ENCODE measurements at regions of chr1 and their contacts with region 1.

Region 1: GRCh38 chr1:154760469-154760933 is 109.6 kb downstream of the KCNN3 start:
- DNase-seq: peak in 1 of 2 experiments; percentile 93
- H3K4me3 ChIP-seq: peak overlapping the region; percentile 33 to 72 (median 38); a peak in 7 of 8 replicates
- H3K27ac ChIP-seq: no peak overlapping the region
- H3K4me1 ChIP-seq: peaks cover 0 to 2% (median under 1%) of the 10 kb centered on the region in 4 experiments; a peak in 1 of 7 replicates
- H3K27me3 ChIP-seq: peaks cover 0 to 8% (median 1%) of the 10 kb centered on the region in 4 experiments; a peak in 4 of 7 replicates
- CTCF ChIP-seq: peak; percentile 72 to 87 (median 72)
- EP300 ChIP-seq: no peak
- POLR2A ChIP-seq: no peak
- RAD21 ChIP-seq: peak; percentile 55 to 70

Region 2: GRCh38 chr1:154730259-154730658 is 30.2 kb before region 1 on chr1:
- CTCF ChIA-PET with region 1: interaction called, 13 read pairs
- POLR2A ChIA-PET with region 1: no interaction called
- DNase-seq: no peak
- H3K4me3 ChIP-seq: no peak overlapping the region
- H3K27ac ChIP-seq: no peak overlapping the region
- H3K4me1 ChIP-seq: peaks cover 3 to 17% (median 8%) of the 10 kb centered on the region in 4 experiments; a peak in 6 of 7 replicates
- H3K27me3 ChIP-seq: no peaks in the 10 kb centered on the region
- CTCF ChIP-seq: no peak
- EP300 ChIP-seq: no peak
- POLR2A ChIP-seq: no peak
- RAD21 ChIP-seq: no peak

Region 3: GRCh38 chr1:154747740-154748404 is 12.6 kb before region 1 on chr1:
- CTCF ChIA-PET with region 1: interaction called, 34 read pairs
- POLR2A ChIA-PET with region 1: no interaction called
- DNase-seq: no peak
- H3K4me3 ChIP-seq: no peak overlapping the region
- H3K27ac ChIP-seq: no peak overlapping the region
- H3K4me1 ChIP-seq: peaks cover 0 to 27% (median 11%) of the 10 kb centered on the region in 4 experiments; a peak in 6 of 7 replicates
- H3K27me3 ChIP-seq: no peaks in the 10 kb centered on the region
- CTCF ChIP-seq: no peak
- EP300 ChIP-seq: no peak
- POLR2A ChIP-seq: no peak
- RAD21 ChIP-seq: no peak

Region 4: GRCh38 chr1:154772606-154773506 is 12.4 kb after region 1 on chr1:
- CTCF ChIA-PET with region 1: interaction called, 56 read pairs
- POLR2A ChIA-PET with region 1: interaction called, 4 read pairs
- DNase-seq: peak; percentile 17 to 69
- H3K4me3 ChIP-seq: no peak overlapping the region
- H3K27ac ChIP-seq: no peak overlapping the region
- H3K4me1 ChIP-seq: peaks cover 0 to 11% (median 8%) of the 10 kb centered on the region in 4 experiments; a peak in 6 of 7 replicates
- H3K27me3 ChIP-seq: no peaks in the 10 kb centered on the region
- CTCF ChIP-seq: peak; percentile 55 to 65 (median 60)
- EP300 ChIP-seq: no peak
- POLR2A ChIP-seq: no peak
- RAD21 ChIP-seq: peak; percentile 76 to 82

Region 5: GRCh38 chr1:154780541-154780940 is 20.0 kb after region 1 on chr1:
- CTCF ChIA-PET with region 1: interaction called, 56 read pairs
- POLR2A ChIA-PET with region 1: interaction called, 3 read pairs
- DNase-seq: no peak
- H3K4me3 ChIP-seq: no peak overlapping the region
- H3K27ac ChIP-seq: no peak overlapping the region
- H3K4me1 ChIP-seq: peaks cover 0 to 4% (median 1%) of the 10 kb centered on the region in 4 experiments; a peak in 3 of 7 replicates
- H3K27me3 ChIP-seq: no peaks in the 10 kb centered on the region
- CTCF ChIP-seq: no peak
- EP300 ChIP-seq: no peak
- POLR2A ChIP-seq: no peak
- RAD21 ChIP-seq: no peak

Region 6: GRCh38 chr1:154870115-154870571 is 109.6 kb after region 1 on chr1 and contains the start of gene KCNN3:
- CTCF ChIA-PET with region 1: interaction called, 16 read pairs
- POLR2A ChIA-PET with region 1: no interaction called
- DNase-seq: peak; percentile 84 to 99
- H3K4me3 ChIP-seq: peak within 1 kb of the TSS; percentile 10 to 58 (median 38); a peak in 7 of 8 replicates
- H3K27ac ChIP-seq: no peak within 1 kb of the TSS
- H3K4me1 ChIP-seq: peaks cover 13 to 51% (median 21%) of the 10 kb centered on the region in 4 experiments; a peak in 6 of 7 replicates
- H3K27me3 ChIP-seq: peaks cover 0 to 10% (median 7%) of the 10 kb centered on the region in 4 experiments; a peak in 3 of 7 replicates
- CTCF ChIP-seq: no peak
- EP300 ChIP-seq: no peak
- POLR2A ChIP-seq: peak in 1 of 2 experiments; percentile 79; a peak in 2 of 3 replicates
- RAD21 ChIP-seq: no peak
- total RNA-seq, gene KCNN3: 2.8 and 3.0 TPM in 2 replicates